PC-3 (cell line): ENCODE measurements at regions of chr9 and their contacts with region 1.

Region 1: GRCh38 chr9:114738581-114739316 is 56.8 kb upstream of the TEX48 start:
- DNase-seq: peak; percentile 80
- ATAC-seq: peak; percentile 52
- H3K4me3 ChIP-seq: no peak overlapping the region
- H3K27ac ChIP-seq: peak overlapping the region; percentile 63
- H3K4me1 ChIP-seq: peaks cover 33% of the 10 kb centered on the region
- H3K27me3 ChIP-seq: no peaks in the 10 kb centered on the region
- CTCF ChIP-seq: peak; percentile 87

Region 2: DNA sequence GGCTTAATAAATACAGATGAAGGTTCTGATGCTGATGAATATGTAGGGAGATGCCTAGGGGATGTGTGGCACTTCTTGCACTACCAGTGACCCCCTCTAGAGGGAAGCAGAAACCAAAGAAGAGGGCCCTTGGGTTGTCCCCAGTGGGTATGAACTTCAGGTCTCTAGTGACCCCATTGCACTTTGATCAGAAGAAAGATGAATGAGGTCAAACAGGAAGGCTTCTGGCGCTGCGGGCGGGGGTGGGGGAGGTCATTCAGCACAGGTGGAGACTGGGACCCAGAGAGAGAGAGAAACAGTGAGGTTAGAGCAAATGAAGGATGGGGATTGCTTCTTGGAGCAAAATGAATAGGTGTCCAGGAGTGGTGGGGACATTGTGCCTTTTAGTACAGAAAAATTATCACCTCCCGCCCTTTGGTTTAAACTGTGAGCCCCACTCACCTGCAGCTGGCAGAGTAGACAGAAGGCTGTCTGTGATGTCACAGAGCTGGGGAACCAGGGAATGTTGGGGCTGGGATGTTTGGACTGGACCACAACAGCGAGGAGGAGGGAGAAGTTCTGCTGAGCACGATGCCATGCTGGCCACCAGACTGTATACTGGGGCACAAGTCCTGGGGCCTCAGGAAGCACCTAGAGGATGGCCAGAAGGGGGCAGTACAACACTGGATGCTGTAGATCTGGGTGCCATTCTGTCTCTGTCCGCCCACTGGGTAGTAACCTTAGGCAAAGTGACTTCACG is 57.0 kb before region 1 on chr9 and contains the start of gene TEX48:
- CTCF ChIA-PET with region 1: no interaction called
- POLR2A ChIA-PET with region 1: no interaction called
- intact Hi-C with region 1: loop called (anchors 1 kb)
- DNase-seq: peak; percentile 82
- ATAC-seq: peak; percentile 75
- H3K4me3 ChIP-seq: no peak within 1 kb of the TSS
- H3K27ac ChIP-seq: peak within 1 kb of the TSS; percentile 71
- H3K4me1 ChIP-seq: peaks cover 40% of the 10 kb centered on the region
- H3K27me3 ChIP-seq: no peaks in the 10 kb centered on the region
- CTCF ChIP-seq: peak; percentile 65
- total RNA-seq, gene TEX48: 2.4 TPM in 1 of 2 replicates, not detected in the other

Region 3: GRCh38 chr9:114691046-114691955 is 47.4 kb before region 1 on chr9:
- CTCF ChIA-PET with region 1: no interaction called
- POLR2A ChIA-PET with region 1: interaction called, 5 read pairs
- intact Hi-C with region 1: loop called (anchors 1 kb)
- DNase-seq: peak; percentile 96
- ATAC-seq: peak; percentile 75
- H3K4me3 ChIP-seq: no peak overlapping the region
- H3K27ac ChIP-seq: peak overlapping the region; percentile 98
- H3K4me1 ChIP-seq: peaks cover 68% of the 10 kb centered on the region
- H3K27me3 ChIP-seq: no peaks in the 10 kb centered on the region
- CTCF ChIP-seq: no peak

Region 4: DNA sequence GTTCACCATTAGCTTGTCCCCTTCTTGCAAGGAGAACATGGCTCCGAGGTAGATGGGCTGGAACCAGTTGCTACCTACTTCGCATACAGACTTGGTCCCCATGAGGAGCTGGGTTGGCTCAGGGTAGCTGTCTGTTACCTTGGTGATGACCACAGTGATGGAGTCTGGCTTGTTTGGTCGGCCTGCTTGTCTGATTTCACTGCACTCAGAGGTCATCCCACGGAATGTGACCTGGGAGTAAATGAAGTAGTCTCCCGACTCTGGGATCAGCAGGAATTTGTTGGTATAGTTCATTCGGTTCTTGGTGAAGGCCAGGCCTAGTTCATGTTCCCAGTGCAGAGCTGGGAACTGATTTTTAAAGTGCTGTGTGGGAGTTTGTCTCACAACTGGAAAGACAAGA is 51.8 kb after region 1 on chr9:
- CTCF ChIA-PET with region 1: no interaction called
- POLR2A ChIA-PET with region 1: no interaction called
- intact Hi-C with region 1: no loop called
- DNase-seq: no peak
- ATAC-seq: no peak
- H3K4me3 ChIP-seq: no peak overlapping the region
- H3K27ac ChIP-seq: no peak overlapping the region
- H3K4me1 ChIP-seq: peaks cover 6% of the 10 kb centered on the region; the same call in 1 of the 2 replicates
- H3K27me3 ChIP-seq: no peaks in the 10 kb centered on the region
- CTCF ChIP-seq: no peak